H1 (cell line): ENCODE measurements at regions of chr20 and their contacts with region 1.

Region 1: GRCh38 chr20:44142413-44142812 is 44.6 kb downstream of the JPH2 start:
- DNase-seq: no peak
- H3K4me3 ChIP-seq: no peak overlapping the region
- H3K27ac ChIP-seq: no peak overlapping the region
- H3K4me1 ChIP-seq: peaks cover 0 to 4% (median under 1%) of the 10 kb centered on the region in 4 experiments; a peak in 3 of 7 replicates
- H3K27me3 ChIP-seq: no peaks in the 10 kb centered on the region
- CTCF ChIP-seq: no peak
- EP300 ChIP-seq: no peak
- POLR2A ChIP-seq: no peak
- RAD21 ChIP-seq: no peak

Region 2: DNA sequence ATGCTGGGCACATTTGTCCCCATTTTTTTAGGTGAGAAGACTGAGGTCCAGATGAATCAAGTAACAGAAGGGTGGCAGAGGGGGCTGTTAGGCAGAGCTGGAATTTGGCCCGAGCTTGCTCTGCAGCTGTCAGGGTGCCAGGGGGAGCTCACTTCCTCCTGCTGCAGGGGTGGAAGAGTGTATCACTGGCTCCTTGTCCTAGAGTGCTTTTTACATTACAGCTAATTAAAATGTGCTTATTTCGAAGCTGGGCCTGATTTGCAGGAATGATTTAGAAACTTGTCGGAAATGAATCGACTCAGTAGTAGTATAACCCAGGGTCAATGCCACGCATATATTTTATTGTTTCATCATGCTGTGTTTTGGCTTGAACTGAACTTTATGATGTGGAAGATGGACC is 216.6 kb before region 1 on chr20:
- CTCF ChIA-PET with region 1: no interaction called
- POLR2A ChIA-PET with region 1: no interaction called
- DNase-seq: no peak
- H3K4me3 ChIP-seq: no peak overlapping the region
- H3K27ac ChIP-seq: no peak overlapping the region
- H3K4me1 ChIP-seq: peaks cover 0 to 2% (median 0%) of the 10 kb centered on the region in 4 experiments; a peak in 2 of 7 replicates
- H3K27me3 ChIP-seq: no peaks in the 10 kb centered on the region; a peak in 1 of 7 replicates
- CTCF ChIP-seq: peak in 1 of 3 experiments; percentile 24; a peak in 1 of 4 replicates
- EP300 ChIP-seq: no peak
- POLR2A ChIP-seq: no peak
- RAD21 ChIP-seq: peak in 1 of 2 experiments; percentile 14; a peak in 1 of 4 replicates

Region 3: GRCh38 chr20:44153636-44154043 is 11.2 kb after region 1 on chr20:
- CTCF ChIA-PET with region 1: interaction called, 12 read pairs
- POLR2A ChIA-PET with region 1: interaction called, 5 read pairs
- DNase-seq: no peak
- H3K4me3 ChIP-seq: no peak overlapping the region
- H3K27ac ChIP-seq: no peak overlapping the region
- H3K4me1 ChIP-seq: no peaks in the 10 kb centered on the region; a peak in 1 of 7 replicates
- H3K27me3 ChIP-seq: no peaks in the 10 kb centered on the region
- CTCF ChIP-seq: no peak
- EP300 ChIP-seq: no peak
- POLR2A ChIP-seq: no peak
- RAD21 ChIP-seq: no peak